ENCODE measurements at regions of chr7 and their contacts with region 1.

Region 1: DNA sequence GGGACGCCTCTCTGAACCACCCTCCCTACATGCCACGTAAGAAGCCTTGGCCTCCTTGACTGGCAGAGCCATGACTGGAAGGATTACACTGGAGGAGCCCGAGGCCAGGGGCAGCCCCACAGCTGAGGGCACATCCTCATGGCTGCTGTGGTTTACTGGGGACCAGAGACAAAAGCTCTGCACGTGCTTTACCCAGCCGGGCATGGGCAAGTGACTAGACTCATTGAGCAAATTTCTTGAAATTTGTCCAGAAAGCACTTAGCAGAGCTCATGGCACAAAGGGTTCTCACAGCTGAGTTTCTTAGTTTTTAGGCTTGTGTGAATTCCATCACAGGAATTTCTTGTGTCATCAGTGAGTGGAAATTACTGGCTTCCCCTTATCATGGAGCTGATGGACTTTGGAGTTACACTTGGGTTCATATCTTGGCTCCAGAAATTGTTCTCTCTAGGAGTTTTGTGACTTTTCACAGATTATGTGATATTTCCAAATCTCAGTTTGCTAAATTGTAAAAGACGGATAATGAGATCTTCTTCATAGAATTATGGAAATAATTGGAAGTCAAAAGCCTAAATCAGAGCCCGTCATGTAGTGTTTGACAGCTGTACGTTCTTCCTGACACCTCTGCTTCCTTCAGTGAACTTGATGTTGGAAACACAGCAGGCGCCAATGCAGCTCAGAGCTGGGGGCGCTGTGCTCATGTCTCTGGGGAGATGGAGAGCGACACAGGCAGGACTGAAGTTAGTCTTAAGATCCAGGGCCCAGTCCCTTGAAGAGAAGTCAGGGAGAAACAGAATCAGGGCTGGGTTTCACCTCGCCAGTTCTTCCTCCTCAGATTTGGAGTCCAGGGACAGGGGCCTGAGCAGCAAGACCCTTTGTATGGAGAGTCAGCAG is 47.7 kb upstream of the MGAM2 start:
- DNase-seq: no peak
- H3K4me3 ChIP-seq: no peak overlapping the region
- H3K27ac ChIP-seq: no peak overlapping the region
- H3K4me1 ChIP-seq: no peaks in the 10 kb centered on the region
- H3K27me3 ChIP-seq: no peaks in the 10 kb centered on the region
- CTCF ChIP-seq: no peak

Region 2: DNA sequence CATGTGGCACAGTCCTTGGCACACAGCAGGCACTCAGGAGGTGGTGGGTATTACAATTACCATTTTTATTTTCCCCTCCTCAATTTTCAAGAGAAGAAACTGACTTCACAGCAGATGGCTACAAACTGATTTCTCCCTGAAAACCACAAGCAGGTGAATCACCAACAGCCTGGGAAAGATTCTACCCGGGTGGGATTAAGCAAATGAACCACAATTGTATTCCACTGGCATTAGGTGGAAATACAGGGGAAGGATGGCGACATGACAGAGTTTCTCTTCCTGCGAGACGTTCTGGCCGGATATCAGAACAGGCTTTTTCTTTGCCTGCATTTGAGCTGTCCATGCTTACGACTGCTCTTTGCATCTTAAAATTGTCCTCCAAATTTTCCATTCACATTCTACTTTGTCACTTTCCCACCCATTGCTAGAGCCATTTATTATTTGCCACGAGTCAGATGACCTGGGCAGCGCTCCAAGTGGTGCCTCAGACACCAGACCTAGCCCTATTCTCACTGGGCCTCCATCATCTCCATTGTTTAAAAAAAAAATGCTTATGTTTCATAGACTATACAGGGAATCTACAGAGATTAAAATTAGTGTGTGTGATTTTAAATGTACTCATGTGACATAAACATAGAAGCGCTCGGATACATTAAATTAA is 366.5 kb before region 1 on chr7:
- CTCF ChIA-PET with region 1: no interaction called
- POLR2A ChIA-PET with region 1: no interaction called
- intact Hi-C with region 1: no loop called
- DNase-seq: no peak
- H3K4me3 ChIP-seq: no peak overlapping the region
- H3K27ac ChIP-seq: no peak overlapping the region
- H3K4me1 ChIP-seq: peaks cover 2% of the 10 kb centered on the region
- H3K27me3 ChIP-seq: no peaks in the 10 kb centered on the region
- CTCF ChIP-seq: no peak

Region 3: GRCh38 chr7:141992156-141992555 is 71.6 kb before region 1 on chr7:
- CTCF ChIA-PET with region 1: no interaction called
- POLR2A ChIA-PET with region 1: no interaction called
- intact Hi-C with region 1: no loop called
- DNase-seq: no peak
- H3K4me3 ChIP-seq: no peak overlapping the region
- H3K27ac ChIP-seq: no peak overlapping the region
- H3K4me1 ChIP-seq: no peaks in the 10 kb centered on the region
- H3K27me3 ChIP-seq: no peaks in the 10 kb centered on the region
- CTCF ChIP-seq: no peak

Region 4: DNA sequence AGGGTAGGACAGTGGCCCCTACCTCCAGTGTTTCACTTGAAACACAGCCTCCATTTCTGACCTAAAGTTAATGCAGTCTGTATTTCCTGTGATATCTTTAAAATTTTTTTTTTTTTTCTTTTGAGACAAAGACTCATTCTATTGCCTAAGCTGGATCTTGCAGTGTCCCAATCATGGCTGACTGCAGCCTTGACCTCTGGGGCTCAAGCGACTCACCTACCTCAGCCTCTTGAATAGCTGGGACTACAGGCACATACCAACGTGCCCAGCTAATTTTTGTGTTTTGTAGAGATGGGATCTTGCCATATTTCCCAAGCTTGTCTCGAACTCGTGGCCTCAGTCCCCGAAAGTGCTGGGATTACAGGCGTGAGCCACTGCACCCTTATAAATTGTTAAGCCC is 31.1 kb after region 1 on chr7:
- CTCF ChIA-PET with region 1: no interaction called
- POLR2A ChIA-PET with region 1: no interaction called
- intact Hi-C with region 1: loop called (anchors 1 kb)
- DNase-seq: no peak
- H3K4me3 ChIP-seq: no peak overlapping the region
- H3K27ac ChIP-seq: no peak overlapping the region
- H3K4me1 ChIP-seq: no peaks in the 10 kb centered on the region
- H3K27me3 ChIP-seq: no peaks in the 10 kb centered on the region
- CTCF ChIP-seq: no peak